ENCODE measurements at regions of chr4 and their contacts with region 1.

Region 1: GRCh38 chr4:166091912-166092510 is 219.0 kb downstream of the TLL1 start:
- DNase-seq: peak; percentile 60
- H3K4me3 Mint-ChIP-seq: no peak overlapping the region
- H3K27ac Mint-ChIP-seq: no peak overlapping the region
- H3K4me1 Mint-ChIP-seq: no peaks in the 10 kb centered on the region
- H3K27me3 Mint-ChIP-seq: no peaks in the 10 kb centered on the region
- CTCF ChIP-seq: peak; percentile 63

Region 2: DNA sequence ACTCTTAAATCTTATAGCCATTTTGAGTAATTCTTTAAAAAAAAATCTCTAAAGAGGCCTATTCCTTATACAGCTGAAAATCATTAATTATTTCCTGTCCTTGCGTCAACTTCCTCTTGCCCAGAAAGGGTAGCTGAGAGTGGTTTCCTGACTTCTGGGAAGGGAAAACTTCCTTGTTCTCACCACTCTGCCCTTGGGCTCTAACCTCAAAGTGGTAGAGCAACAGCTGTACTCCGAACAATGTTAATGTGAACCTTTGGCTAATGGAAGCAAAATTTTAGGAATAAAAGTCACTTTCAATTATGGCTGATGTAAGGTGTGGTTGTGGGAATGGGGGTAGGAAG is 869.4 kb before region 1 on chr4:
- CTCF ChIA-PET with region 1: no interaction called
- POLR2A ChIA-PET with region 1: no interaction called
- intact Hi-C with region 1: no loop called
- DNase-seq: peak; percentile 82
- H3K4me3 Mint-ChIP-seq: peak overlapping the region; percentile 64
- H3K27ac Mint-ChIP-seq: peak overlapping the region; percentile 95
- H3K4me1 Mint-ChIP-seq: peaks cover 32% of the 10 kb centered on the region
- H3K27me3 Mint-ChIP-seq: no peaks in the 10 kb centered on the region
- CTCF ChIP-seq: no peak

Region 3: DNA sequence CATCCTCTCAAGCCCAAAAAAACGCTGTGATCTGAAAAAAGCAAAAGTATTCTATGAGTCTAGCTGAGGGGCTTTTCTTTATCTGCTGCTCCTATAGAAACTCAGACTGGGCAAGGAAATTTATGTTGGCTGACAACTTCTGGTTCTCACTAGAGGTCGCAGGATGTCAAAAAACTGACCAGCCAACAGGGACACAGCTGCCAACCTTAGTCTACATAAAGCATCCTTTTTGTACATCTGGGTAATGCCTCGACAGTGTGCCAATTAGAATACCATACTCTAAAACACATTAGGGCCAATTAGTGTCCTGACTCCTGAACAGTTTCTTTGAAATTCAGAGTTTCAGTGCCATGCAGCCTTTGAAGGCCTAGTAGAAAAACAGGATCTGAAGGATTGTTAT is 227.7 kb before region 1 on chr4:
- CTCF ChIA-PET with region 1: interaction called, 8 read pairs
- POLR2A ChIA-PET with region 1: interaction called, 7 read pairs
- intact Hi-C with region 1: loop called (anchors 1 kb)
- DNase-seq: peak; percentile 39
- H3K4me3 Mint-ChIP-seq: no peak overlapping the region
- H3K27ac Mint-ChIP-seq: no peak overlapping the region
- H3K4me1 Mint-ChIP-seq: no peaks in the 10 kb centered on the region
- H3K27me3 Mint-ChIP-seq: no peaks in the 10 kb centered on the region
- CTCF ChIP-seq: peak; percentile 22